ENCODE measurements at regions of chr16 and their contacts with region 1.

Region 1: GRCh38 chr16:75206749-75207451 is at the start of gene CTRB2:
- DNase-seq: peak in 1 of 2 donors; percentile 30
- H3K4me3 ChIP-seq: no peak within 1 kb of the TSS
- H3K27ac ChIP-seq: no peak within 1 kb of the TSS
- H3K4me1 ChIP-seq: no peaks in the 10 kb centered on the region
- H3K27me3 ChIP-seq: no peaks in the 10 kb centered on the region
- CTCF ChIP-seq: no peak
- POLR2A ChIP-seq: no peak
- total RNA-seq, gene CTRB2: not detected

Region 2: DNA sequence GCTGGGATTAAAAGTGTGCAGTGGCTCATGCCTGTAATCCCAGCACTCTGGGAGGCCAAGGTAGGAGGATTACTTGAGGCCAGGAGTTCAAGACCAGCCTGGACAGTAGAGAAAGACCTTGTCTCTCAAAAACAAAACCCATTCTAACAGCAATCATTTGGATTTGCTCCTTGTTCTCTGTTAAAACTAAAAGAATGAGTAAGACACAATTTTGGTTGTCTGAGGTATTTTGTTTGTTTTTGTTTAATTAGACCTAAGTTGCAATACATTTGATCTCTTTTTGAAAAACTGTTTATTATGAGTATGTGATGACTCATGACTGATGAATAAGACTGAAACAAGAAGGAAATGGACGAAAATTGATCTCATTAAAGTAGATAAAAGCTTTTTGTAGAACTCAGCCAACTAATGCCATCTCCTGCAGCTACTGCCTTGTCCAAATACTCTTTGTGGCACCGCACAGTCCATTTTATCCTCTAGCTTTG is 629.0 kb before region 1 on chr16:
- intact Hi-C with region 1: no loop called
- DNase-seq: no peak
- H3K4me3 ChIP-seq: no peak overlapping the region
- H3K27ac ChIP-seq: no peak overlapping the region
- H3K4me1 ChIP-seq: no peaks in the 10 kb centered on the region
- H3K27me3 ChIP-seq: no peaks in the 10 kb centered on the region
- CTCF ChIP-seq: no peak
- POLR2A ChIP-seq: no peak

Region 3: DNA sequence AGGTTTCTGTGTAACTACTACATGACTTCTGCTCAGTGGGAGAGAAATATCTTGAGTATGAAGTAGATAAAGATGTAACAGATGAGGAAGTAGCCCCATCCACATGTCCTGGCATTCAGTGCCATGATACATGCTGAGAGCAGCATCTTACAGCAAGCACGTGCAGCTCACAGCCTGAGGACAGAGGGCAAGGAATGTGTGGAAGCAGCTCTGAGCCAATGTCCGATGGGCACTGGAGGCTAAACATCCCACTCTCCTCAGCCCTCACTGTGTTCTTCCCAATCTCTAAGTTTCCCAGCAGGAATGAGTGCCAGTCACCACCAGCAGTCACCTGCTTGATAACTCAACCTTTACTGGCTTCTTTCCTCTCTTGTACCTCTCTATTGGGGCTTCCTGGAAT is 186.0 kb after region 1 on chr16:
- intact Hi-C with region 1: loop called (anchors 10 kb)
- DNase-seq: no peak
- H3K4me3 ChIP-seq: no peak overlapping the region
- H3K27ac ChIP-seq: no peak overlapping the region
- H3K4me1 ChIP-seq: no peaks in the 10 kb centered on the region
- H3K27me3 ChIP-seq: no peaks in the 10 kb centered on the region
- CTCF ChIP-seq: no peak
- POLR2A ChIP-seq: no peak

Region 4: DNA sequence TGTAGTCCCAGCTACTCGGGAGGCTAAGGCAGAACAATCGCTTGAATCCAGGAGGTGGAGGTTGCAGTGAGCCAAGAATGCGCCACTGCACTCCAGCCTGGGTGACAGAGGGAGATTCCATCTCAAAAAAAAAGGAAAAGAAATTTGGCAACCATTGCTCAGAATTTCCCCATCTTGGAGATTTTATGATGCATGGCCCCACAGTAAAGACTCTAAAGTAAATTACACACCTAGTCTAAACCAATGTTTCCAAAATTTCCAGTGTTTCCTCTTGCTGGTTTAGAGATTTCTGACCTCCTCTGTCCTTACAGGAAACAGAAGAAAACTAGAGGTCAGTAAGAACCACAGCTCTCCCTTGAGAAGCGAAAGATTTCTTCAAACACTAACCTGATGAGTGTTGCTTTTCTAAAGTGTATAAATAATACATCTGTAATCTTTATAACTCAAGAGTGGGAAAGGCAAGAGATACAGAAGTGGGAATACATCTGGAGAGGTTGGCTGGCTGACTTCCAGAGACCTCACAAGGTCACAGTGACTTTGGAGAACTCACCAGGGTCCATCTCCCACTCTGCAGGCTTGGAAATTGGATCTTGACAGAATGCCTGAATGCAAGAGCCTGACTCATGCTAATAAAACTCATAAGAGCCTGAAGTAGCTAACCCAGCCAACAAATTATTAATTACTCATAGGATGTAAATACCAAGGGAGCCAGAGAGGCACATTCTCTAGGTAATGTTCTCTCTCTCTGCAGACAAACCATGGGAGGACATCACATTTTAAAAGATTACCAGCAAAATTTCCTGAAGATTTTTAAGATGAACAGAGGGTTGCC is 407.4 kb after region 1 on chr16:
- intact Hi-C with region 1: loop called (anchors 5 kb)
- DNase-seq: no peak
- H3K4me3 ChIP-seq: no peak overlapping the region
- H3K27ac ChIP-seq: no peak overlapping the region
- H3K4me1 ChIP-seq: no peaks in the 10 kb centered on the region
- H3K27me3 ChIP-seq: no peaks in the 10 kb centered on the region
- CTCF ChIP-seq: no peak
- POLR2A ChIP-seq: no peak

Measured in breast epithelium (tissue), 4 donors.